Heart right ventricle (tissue), 16 donors: ENCODE measurements at regions of chr5 and their contacts with region 1.

Region 1: GRCh38 chr5:163564321-163564938 is 59.0 kb downstream of the MAT2B start:
- DNase-seq: peak in 1 of 2 donors; percentile 47
- ATAC-seq: peak in 1 of 8 donors; percentile 59
- H3K4me3 ChIP-seq: no peak overlapping the region
- H3K27ac ChIP-seq: no peak overlapping the region
- H3K4me1 ChIP-seq: peaks cover 0 to 24% (median 14%) of the 10 kb centered on the region in 9 donors
- H3K27me3 ChIP-seq: peaks cover 0 to 48% (median 26%) of the 10 kb centered on the region in 7 donors
- CTCF ChIP-seq: peak; percentile 81 to 94 (median 89)

Region 2: DNA sequence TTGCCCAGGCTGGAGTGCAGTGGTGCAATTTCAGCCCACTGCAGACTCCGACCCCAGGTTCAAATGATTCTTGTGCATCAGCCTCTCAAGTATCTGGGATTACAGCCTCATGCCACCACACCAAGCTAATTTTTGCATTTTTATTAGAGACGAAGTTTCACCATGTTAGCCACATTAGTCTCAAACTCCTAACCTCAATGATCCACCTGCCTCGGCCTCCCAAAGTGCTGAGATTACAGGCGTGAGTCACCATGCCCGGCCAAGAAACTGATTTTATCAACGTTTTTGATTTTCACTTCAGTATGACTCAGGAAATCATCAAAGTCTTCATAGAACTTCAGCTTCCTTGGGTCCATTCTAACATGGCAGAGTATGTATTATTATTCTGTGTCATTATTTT is 1371.4 kb before region 1 on chr5:
- intact Hi-C with region 1: loop called in 1 of 10 experiments (anchors 10 kb)
- DNase-seq: no peak
- ATAC-seq: no peak
- H3K4me3 ChIP-seq: no peak overlapping the region
- H3K27ac ChIP-seq: no peak overlapping the region
- H3K4me1 ChIP-seq: no peaks in the 10 kb centered on the region
- H3K27me3 ChIP-seq: no peaks in the 10 kb centered on the region
- CTCF ChIP-seq: no peak

Region 3: GRCh38 chr5:162858770-162859169 is 705.7 kb before region 1 on chr5:
- intact Hi-C with region 1: no loop called
- DNase-seq: no peak
- ATAC-seq: no peak
- H3K4me3 ChIP-seq: no peak overlapping the region
- H3K27ac ChIP-seq: no peak overlapping the region
- H3K4me1 ChIP-seq: no peaks in the 10 kb centered on the region
- H3K27me3 ChIP-seq: no peaks in the 10 kb centered on the region
- CTCF ChIP-seq: no peak

Region 4: DNA sequence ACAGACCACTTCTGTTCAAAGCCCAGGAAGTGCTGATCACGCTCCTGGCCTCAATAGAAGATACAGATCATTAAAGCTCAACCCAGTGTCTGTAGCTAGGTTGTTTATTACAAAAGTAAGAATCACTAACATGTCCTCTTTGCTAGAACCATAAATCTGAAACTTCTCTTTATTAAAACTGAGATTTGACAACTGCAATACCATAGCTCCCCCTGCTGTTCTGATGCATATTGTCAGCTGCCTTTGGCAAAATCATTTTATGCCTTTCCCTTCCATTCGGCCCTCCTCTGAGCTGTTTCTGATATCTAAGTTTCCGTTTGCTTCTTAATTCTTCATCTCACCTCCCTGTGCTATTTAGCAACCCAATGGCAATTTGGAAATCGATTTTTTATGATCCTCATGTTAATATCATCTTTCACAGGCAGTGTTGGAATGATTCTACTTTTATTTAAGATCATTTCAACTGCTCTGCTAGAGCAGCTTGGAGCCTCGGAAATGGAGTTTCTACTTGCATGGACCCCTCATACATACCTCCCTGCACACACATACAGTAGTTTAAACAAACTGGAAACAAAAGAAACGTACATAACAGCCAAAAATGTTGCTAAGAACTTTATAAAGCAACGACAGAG is 939.8 kb after region 1 on chr5:
- intact Hi-C with region 1: loop called in 9 of 10 experiments (anchors 5 to 10 kb)
- DNase-seq: peak in 1 of 2 donors; percentile 34
- ATAC-seq: no peak
- H3K4me3 ChIP-seq: no peak overlapping the region
- H3K27ac ChIP-seq: no peak overlapping the region
- H3K4me1 ChIP-seq: no peaks in the 10 kb centered on the region
- H3K27me3 ChIP-seq: peaks cover 0 to 13% (median 0%) of the 10 kb centered on the region in 7 donors
- CTCF ChIP-seq: peak; percentile 46 to 78 (median 74)

Region 5: GRCh38 chr5:165209086-165209727 is 1644.8 kb after region 1 on chr5:
- intact Hi-C with region 1: loop called in 6 of 10 experiments (anchors 5 to 10 kb)
- DNase-seq: no peak
- ATAC-seq: no peak
- H3K4me3 ChIP-seq: no peak overlapping the region
- H3K27ac ChIP-seq: no peak overlapping the region
- H3K4me1 ChIP-seq: no peaks in the 10 kb centered on the region
- H3K27me3 ChIP-seq: peaks cover 0 to 5% (median 0%) of the 10 kb centered on the region in 7 donors
- CTCF ChIP-seq: peak in 7 of 9 donors; percentile 57 to 72 (median 65)